Right cardiac atrium (tissue), 5 donors: ENCODE measurements at regions of chr4 and their contacts with region 1.

Region 1: DNA sequence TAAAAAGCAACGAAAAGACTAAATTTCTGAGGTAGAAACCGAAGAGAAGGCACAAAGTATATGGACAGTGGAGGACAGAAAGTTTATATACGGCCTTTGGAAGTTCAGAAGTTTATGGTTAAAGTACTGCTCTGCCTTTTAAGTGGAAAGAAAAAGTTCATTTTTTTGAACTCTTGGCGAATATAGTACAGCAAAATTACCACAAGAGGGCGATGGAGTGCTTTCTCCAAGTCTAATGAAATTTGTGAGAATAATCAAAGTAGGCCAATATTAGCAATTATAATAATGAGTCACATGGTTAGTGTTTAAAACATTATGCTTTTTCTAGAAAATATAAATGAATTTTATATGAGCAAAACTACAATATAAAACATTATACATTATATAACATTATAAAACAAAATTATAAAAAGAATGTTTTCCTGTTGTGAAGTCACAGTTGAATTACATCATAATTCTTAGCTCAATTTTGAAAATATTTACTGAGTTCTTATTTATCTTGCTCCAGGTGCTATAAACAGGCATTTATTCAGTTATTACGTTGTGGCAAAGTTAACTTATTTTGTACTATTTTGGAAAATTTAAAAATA is 136.2 kb upstream of the BMPR1B start:
- DNase-seq: no peak
- ATAC-seq: no peak
- H3K4me3 ChIP-seq: no peak overlapping the region
- H3K27ac ChIP-seq: no peak overlapping the region
- H3K4me1 ChIP-seq: no peaks in the 10 kb centered on the region
- H3K27me3 ChIP-seq: no peaks in the 10 kb centered on the region

Region 2: GRCh38 chr4:94390804-94391410 is 230.7 kb before region 1 on chr4:
- intact Hi-C with region 1: no loop called
- DNase-seq: no peak
- ATAC-seq: no peak
- H3K4me3 ChIP-seq: no peak overlapping the region
- H3K27ac ChIP-seq: no peak overlapping the region
- H3K4me1 ChIP-seq: no peaks in the 10 kb centered on the region
- H3K27me3 ChIP-seq: no peaks in the 10 kb centered on the region

Region 3: GRCh38 chr4:94548571-94548970 is 73.0 kb before region 1 on chr4:
- intact Hi-C with region 1: no loop called
- DNase-seq: peak in 1 of 3 donors; percentile 47
- ATAC-seq: peak; percentile 83 to 91
- H3K4me3 ChIP-seq: no peak overlapping the region
- H3K27ac ChIP-seq: peak overlapping the region; percentile 45
- H3K4me1 ChIP-seq: peaks cover 4% of the 10 kb centered on the region
- H3K27me3 ChIP-seq: no peaks in the 10 kb centered on the region

Region 4: GRCh38 chr4:95114521-95114920 is 492.9 kb after region 1 on chr4:
- intact Hi-C with region 1: loop called in 1 of 4 experiments (anchors 10 kb)
- DNase-seq: no peak
- ATAC-seq: no peak
- H3K4me3 ChIP-seq: no peak overlapping the region
- H3K27ac ChIP-seq: no peak overlapping the region
- H3K4me1 ChIP-seq: no peaks in the 10 kb centered on the region
- H3K27me3 ChIP-seq: no peaks in the 10 kb centered on the region